Activated CD8-positive, alpha-beta memory T cell treated with anti-CD3 and anti-CD28 coated beads, Interleukin-2, amount 10 ng/mL, durations not matched to agents 7 days and 5 days (primary cell): ENCODE measurements at regions of chr13 and their contacts with region 1.

Region 1: DNA sequence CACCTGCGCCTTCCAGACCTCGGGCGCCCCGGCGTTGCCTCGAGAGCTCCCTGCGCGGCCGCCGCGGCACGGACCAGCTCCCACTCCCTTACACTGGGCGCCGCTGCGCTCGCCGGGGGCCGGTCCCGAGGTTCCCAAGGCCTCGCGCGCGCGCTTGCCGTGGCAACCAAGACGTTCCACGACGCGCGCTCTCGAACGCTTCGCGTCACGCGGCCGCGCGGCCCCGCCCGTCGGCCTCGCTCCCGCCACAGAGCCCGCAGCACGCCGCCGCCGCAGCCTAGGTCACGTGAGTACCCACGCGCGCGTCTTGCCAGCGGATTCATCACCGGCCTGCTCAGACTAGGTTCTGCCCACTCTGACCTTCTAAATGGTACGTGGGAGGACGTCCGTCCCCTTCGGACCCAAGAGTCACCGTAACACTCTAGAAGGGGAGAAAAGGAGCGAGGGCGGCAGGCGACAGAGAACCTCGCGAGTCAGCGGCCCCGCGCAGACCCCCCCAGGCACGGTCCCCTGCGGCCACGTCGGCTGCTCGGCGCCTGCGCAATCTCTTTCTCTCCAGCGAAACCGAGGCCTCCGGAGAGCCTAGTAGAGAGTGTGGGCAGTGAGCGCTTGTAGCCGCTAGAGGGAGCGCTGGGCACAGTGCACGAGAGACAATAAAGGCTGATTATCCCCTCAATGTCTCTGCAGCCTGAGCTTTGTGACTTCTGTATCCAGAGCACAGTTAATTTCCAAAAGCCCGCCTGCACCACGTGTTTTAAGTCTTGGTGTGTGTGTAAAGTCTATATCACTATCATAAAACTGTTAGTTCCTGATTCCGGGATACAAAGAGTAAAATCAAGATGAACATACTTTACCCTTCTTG is at the start of gene SPART:
- DNase-seq: peak; percentile 87
- ATAC-seq: peak; percentile 95
- H3K4me3 Mint-ChIP-seq: peak within 1 kb of the TSS; percentile 80
- H3K27ac Mint-ChIP-seq: peak within 1 kb of the TSS; percentile 88
- H3K4me1 Mint-ChIP-seq: peaks cover 18% of the 10 kb centered on the region
- H3K27me3 Mint-ChIP-seq: peaks cover 29% of the 10 kb centered on the region
- total RNA-seq, gene SPART: 8.4 to 16.3 TPM

Region 2: GRCh38 chr13:36231236-36231635 is 115.2 kb before region 1 on chr13:
- CTCF ChIA-PET with region 1: no interaction called
- DNase-seq: no peak
- ATAC-seq: no peak
- H3K4me3 Mint-ChIP-seq: no peak overlapping the region
- H3K27ac Mint-ChIP-seq: no peak overlapping the region
- H3K4me1 Mint-ChIP-seq: no peaks in the 10 kb centered on the region
- H3K27me3 Mint-ChIP-seq: no peaks in the 10 kb centered on the region

Region 3: GRCh38 chr13:36251526-36251925 is 94.9 kb before region 1 on chr13:
- CTCF ChIA-PET with region 1: no interaction called
- DNase-seq: no peak
- ATAC-seq: no peak
- H3K4me3 Mint-ChIP-seq: no peak overlapping the region
- H3K27ac Mint-ChIP-seq: no peak overlapping the region
- H3K4me1 Mint-ChIP-seq: no peaks in the 10 kb centered on the region
- H3K27me3 Mint-ChIP-seq: no peaks in the 10 kb centered on the region

Region 4: DNA sequence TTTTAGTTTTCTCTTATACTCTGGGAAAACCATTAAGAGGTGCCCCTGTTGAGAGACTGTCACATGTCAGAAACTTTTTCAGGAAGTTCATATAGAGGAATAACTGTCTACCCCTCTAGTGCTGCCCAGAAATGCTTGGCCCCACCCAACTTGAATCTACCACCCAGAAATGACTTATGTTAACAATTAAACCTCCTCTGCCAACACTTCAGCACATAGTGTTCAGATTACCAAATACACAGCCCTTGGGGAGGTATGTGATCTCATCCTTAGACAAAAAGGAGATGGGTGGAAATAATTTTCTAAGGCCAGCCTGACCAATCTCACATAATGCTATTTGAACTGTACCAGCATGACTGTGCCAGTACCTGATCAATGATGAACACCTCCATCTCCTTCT is 84.5 kb before region 1 on chr13:
- CTCF ChIA-PET with region 1: no interaction called
- DNase-seq: no peak
- ATAC-seq: no peak
- H3K4me3 Mint-ChIP-seq: no peak overlapping the region
- H3K27ac Mint-ChIP-seq: no peak overlapping the region
- H3K4me1 Mint-ChIP-seq: no peaks in the 10 kb centered on the region
- H3K27me3 Mint-ChIP-seq: peaks cover 3% of the 10 kb centered on the region

Region 5: GRCh38 chr13:36324011-36324483 is 22.4 kb before region 1 on chr13:
- CTCF ChIA-PET with region 1: no interaction called
- DNase-seq: no peak
- ATAC-seq: no peak
- H3K4me3 Mint-ChIP-seq: no peak overlapping the region
- H3K27ac Mint-ChIP-seq: no peak overlapping the region
- H3K4me1 Mint-ChIP-seq: peaks cover 2% of the 10 kb centered on the region
- H3K27me3 Mint-ChIP-seq: no peaks in the 10 kb centered on the region

Region 6: GRCh38 chr13:36736119-36736726 is 389.8 kb after region 1 on chr13:
- CTCF ChIA-PET with region 1: interaction called, 12 read pairs
- DNase-seq: no peak
- ATAC-seq: no peak
- H3K4me3 Mint-ChIP-seq: no peak overlapping the region
- H3K27ac Mint-ChIP-seq: no peak overlapping the region
- H3K4me1 Mint-ChIP-seq: no peaks in the 10 kb centered on the region
- H3K27me3 Mint-ChIP-seq: no peaks in the 10 kb centered on the region